Sigmoid colon (tissue), 7 donors: ENCODE measurements at regions of chr11 and their contacts with region 1.

Region 1: GRCh38 chr11:8870411-8871170 is 40.4 kb upstream of the AKIP1 start:
- DNase-seq: peak; percentile 79
- H3K4me3 ChIP-seq: peak overlapping the region; percentile 81 to 91 (median 83)
- H3K27ac ChIP-seq: peak overlapping the region; percentile 88 to 94 (median 92)
- H3K4me1 ChIP-seq: peaks cover 0 to 61% (median 31%) of the 10 kb centered on the region in 4 donors
- H3K27me3 ChIP-seq: no peaks in the 10 kb centered on the region
- CTCF ChIP-seq: no peak
- EP300 ChIP-seq: no peak
- POLR2A ChIP-seq: no peak

Region 2: DNA sequence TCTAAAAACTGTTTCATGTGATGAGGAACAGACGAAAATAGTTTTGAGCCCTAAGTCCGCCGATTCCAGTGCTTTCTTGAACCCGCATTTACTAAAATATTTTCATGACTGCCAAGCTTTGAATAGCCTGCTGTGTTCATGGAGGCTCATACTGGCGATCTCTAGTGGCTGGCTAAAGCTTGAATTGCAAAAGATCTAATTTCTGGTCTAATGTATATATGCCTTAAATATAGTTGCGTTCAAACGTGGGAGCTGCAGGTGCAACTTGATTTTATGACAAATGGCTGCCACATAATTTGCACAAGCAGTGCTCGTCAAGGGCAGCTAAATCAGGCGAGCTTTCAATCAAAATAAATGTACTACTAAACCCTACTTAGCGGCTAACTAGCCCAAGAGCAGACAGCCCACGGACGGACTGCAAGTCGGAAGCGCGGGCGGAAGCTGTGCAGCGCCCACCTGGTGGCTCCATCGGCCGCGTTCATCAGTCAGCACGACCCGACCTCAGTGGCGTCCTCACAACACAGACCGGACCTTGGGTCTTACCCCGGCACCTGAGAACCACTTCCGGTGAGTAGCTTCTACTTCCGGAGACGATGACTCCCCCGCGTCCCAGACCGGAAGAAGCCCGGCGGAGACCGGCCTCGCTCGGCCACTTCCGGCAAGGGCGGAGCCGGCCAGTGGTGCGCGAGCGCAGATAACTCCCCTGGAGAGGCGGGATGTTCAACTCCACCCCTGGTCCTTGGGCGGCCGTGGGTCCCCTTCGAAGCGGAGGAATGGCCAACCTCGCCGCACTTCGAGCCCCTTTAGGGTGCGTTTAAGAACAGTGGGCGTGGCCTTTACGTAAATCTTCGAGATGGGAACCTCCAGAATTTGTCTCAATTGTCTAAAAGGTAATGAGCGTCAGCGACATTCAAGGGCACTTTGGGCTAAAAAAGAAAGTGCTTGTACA is 181.9 kb before region 1 on chr11:
- intact Hi-C with region 1: loop called (anchors 5 kb)
- DNase-seq: peak; percentile 97
- H3K4me3 ChIP-seq: peak overlapping the region; percentile 42 to 64 (median 56)
- H3K27ac ChIP-seq: peak overlapping the region; percentile 83 to 89 (median 88)
- H3K4me1 ChIP-seq: peaks cover 0 to 35% (median 23%) of the 10 kb centered on the region in 4 donors
- H3K27me3 ChIP-seq: no peaks in the 10 kb centered on the region
- CTCF ChIP-seq: no peak
- EP300 ChIP-seq: peak in 1 of 4 donors; percentile 50
- POLR2A ChIP-seq: peak; percentile 41 to 64

Region 3: DNA sequence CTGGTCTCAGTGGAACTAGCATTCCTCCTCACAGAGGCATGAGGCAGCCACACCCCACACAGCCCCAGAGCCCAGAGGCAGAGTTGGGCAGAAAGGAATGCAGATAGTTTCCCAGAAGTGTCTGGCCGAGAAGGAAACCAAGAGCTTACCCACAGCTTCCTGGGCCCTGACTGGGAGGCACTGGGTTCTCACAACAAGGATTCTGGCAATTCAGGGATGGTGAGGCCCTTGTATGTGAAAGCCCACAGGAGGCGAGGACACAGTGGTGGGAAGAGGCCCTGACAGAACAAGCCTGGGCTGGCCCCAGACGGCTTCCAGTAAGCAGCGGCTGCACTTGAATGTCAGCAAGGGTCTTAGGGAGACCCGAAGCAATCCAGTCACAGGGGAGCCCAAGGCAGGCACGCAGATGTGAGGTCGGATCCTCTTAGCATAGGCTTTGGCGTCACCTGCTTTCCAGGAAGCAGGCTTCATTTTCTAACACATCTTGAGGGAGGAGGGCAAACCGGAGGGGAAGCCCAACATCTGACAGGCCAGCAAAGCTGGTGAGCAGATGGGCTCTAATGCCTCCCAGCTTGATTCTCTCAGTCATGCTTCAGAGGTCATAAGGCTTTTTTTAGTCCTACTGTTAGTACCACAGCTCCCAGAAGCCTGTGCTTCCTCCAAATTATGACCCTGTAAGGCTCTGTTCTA is 37.9 kb before region 1 on chr11:
- intact Hi-C with region 1: loop called (anchors 5 kb)
- DNase-seq: peak; percentile 64
- H3K4me3 ChIP-seq: no peak overlapping the region
- H3K27ac ChIP-seq: peak overlapping the region; percentile 70 to 87 (median 82)
- H3K4me1 ChIP-seq: peaks cover 0 to 27% (median 17%) of the 10 kb centered on the region in 4 donors
- H3K27me3 ChIP-seq: no peaks in the 10 kb centered on the region
- CTCF ChIP-seq: no peak
- EP300 ChIP-seq: peak in 1 of 4 donors; percentile 46
- POLR2A ChIP-seq: no peak